Activated T-helper 1 cell treated with anti-CD3 and anti-CD28 coated beads, Interleukin-12 subunit alpha, Interleukin-12 subunit beta, Interleukin-2, Interleukin-4 antibody, amounts not matched to agents 30 ng/mL and 10 ng/mL and 1 ng/mL, durations not matched to agents 14 hours and 24 hours and 36 hours (primary cell): ENCODE measurements at regions of chr6 and their contacts with region 1.

Region 1: DNA sequence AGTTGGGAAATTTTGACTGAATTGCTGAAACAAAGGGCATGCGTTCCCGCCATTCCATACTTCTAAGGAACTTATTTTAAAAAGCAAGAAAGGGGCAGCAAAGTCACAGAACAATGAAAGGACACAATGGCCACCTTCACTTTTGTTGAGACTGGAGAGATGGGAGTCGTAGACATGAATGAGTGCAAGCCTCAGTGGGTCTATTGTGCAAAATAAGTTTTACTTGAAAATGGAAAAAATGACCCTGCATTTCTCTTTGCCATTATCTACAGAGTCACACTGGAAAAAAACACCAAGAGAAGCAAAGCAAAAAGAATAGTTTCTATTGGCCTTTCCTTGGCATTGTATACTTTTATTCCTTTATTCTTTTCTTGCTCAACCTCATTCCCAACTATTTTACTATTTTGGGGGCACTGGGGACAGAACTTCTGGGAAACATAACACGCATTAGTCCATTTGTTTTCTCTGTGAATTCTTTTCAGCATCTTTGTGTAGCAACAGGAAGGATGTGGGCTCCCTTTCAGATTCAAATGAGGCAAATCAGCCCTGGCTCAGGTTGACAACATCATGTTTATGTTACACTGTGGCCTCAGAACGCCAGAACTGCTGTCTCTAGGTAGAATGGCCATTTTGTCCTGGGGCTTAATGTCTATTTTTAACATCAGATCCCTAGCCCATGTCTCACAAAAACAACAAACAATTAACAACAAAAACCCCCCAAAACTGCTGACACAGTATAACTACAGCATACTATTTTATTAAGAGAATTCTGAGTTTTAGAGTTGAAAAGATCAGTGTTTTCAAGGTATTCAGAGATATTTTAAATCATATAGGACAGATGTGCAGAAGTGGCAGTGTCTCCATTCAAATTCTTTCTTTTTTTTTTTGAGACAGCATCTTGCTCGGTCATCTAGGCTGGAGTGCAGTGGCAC is 122.2 kb downstream of the FYN start:
- DNase-seq: peak; percentile 66
- H3K4me3 Mint-ChIP-seq: peak overlapping the region; percentile 70
- H3K27ac Mint-ChIP-seq: peak overlapping the region; percentile 97
- H3K4me1 Mint-ChIP-seq: peaks cover 95% of the 10 kb centered on the region
- H3K27me3 Mint-ChIP-seq: no peaks in the 10 kb centered on the region

Region 2: GRCh38 chr6:111737065-111737521 is 13.9 kb before region 1 on chr6:
- intact Hi-C with region 1: loop called (anchors 1 kb)
- DNase-seq: no peak
- H3K4me3 Mint-ChIP-seq: peak overlapping the region; percentile 46
- H3K27ac Mint-ChIP-seq: peak overlapping the region; percentile 75
- H3K4me1 Mint-ChIP-seq: peaks cover 93% of the 10 kb centered on the region
- H3K27me3 Mint-ChIP-seq: no peaks in the 10 kb centered on the region